SK-MEL-5 (cell line): ENCODE measurements at regions of chr15 and their contacts with region 1.

Region 1: GRCh38 chr15:45200001-45200798 is 12.4 kb upstream of the SHF start:
- DNase-seq: peak; percentile 96

Region 2: GRCh38 chr15:45402162-45402954 is 202.2 kb after region 1 on chr15:
- in situ Hi-C with region 1: loop called (anchors 10 kb)
- DNase-seq: peak; percentile 98